GM10248 (cell line): ENCODE measurements at regions of chr3 and their contacts with region 1.

Region 1: GRCh38 chr3:182258538-182259177 is 534.6 kb upstream of the ATP11B start:
- DNase-seq: peak; percentile 27
- CTCF ChIP-seq: peak; percentile 38

Region 2: DNA sequence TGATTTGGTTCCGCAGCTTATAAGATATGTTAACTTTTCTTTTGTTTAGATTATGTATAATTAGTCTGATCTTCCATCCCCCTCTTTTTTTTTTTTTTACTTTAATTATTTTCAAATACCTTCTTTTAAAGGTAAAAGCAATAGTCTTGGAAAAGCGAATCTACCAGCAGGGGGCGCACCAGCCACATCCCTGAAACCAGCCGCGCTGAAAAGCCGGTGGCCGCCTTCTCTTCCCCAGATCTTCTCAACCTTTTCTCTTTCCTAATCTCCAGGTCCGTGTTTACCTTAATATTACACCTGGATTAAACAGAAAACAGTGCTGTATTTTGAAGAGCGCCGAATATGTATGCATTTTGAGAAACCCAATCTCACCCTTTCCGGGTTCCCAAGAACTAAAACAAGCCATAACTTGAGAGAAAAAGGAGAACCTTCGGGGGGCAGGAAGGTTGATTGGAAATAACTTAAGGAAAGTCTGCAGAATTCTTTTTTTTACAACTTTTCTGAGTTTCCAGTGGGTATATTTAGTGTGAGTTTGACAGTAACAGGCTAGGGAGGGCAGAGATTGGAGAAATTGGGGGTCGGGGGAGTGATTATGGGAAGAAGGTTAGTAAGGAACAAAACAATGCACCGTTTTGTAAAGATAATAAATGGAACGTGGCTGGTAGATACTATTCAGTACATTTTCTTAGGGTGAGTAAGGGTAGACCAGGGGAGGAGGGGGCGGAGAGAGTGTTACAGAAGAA is 549.0 kb before region 1 on chr3:
- CTCF ChIA-PET with region 1: interaction called, 10 read pairs
- POLR2A ChIA-PET with region 1: no interaction called
- DNase-seq: no peak
- CTCF ChIP-seq: peak; percentile 77

Region 3: GRCh38 chr3:182180654-182181395 is 77.8 kb before region 1 on chr3:
- CTCF ChIA-PET with region 1: no interaction called
- POLR2A ChIA-PET with region 1: no interaction called
- DNase-seq: no peak
- CTCF ChIP-seq: no peak